ENCODE measurements at regions of chr17 and their contacts with region 1.

Region 1: DNA sequence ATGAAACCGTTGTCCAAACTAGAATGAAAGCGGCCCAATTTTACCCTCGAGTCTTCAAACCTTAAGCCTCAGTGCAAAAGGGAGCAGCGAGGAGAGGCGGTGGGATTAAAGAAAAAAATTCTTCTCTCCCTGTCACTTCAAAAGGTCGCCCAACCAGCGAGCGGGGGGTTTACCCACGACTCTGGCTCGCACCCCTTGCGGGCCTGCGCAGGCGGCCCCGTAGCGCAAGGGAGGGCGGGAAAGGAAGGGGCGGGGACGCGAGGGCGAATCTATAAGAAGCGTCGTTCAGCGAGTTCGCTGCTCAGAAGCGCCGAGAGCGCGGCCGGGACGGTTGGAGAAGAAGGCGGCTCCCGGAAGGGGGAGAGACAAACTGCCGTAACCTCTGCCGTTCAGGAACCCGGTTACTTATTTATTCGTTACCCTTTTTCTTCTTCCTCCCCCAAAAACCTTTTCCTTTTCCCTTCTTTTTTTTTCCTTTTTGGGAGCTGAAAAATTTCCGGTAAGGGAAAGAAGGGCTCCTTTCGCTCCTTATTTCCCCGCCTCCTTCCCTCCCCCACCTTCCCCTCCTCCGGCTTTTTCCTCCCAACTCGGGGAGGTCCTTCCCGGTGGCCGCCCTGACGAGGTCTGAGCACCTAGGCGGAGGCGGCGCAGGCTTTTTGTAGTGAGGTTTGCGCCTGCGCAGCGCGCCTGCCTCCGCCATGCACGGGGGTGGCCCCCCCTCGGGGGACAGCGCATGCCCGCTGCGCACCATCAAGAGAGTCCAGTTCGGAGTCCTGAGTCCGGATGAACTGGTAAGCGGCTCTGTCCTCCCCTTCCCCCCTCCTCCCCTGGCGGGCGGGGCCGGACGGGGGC is at the start of gene POLR2A:
- DNase-seq: peak; percentile 98
- H3K4me3 ChIP-seq: peak within 1 kb of the TSS; percentile 89
- H3K27ac ChIP-seq: peak within 1 kb of the TSS; percentile 90
- H3K4me1 ChIP-seq: peaks cover 38% of the 10 kb centered on the region
- CTCF ChIP-seq: no peak
- total RNA-seq, gene POLR2A: 76.6 and 84.2 TPM in 2 replicates

Region 2: GRCh38 chr17:7239091-7240027 is 244.9 kb before region 1 on chr17 and contains the start of gene PHF23:
- CTCF ChIA-PET with region 1: interaction called, 4 read pairs
- POLR2A ChIA-PET with region 1: no interaction called
- intact Hi-C with region 1: loop called (anchors 5 kb)
- DNase-seq: peak; percentile 99
- H3K4me3 ChIP-seq: peak within 1 kb of the TSS; percentile 100
- H3K27ac ChIP-seq: peak within 1 kb of the TSS; percentile 86
- H3K4me1 ChIP-seq: peaks cover 60% of the 10 kb centered on the region
- CTCF ChIP-seq: 0 out of 2 replicates have a peak, but pooled peaks have one; percentile 9
- total RNA-seq, gene PHF23: 47.7 and 50.8 TPM in 2 replicates

Region 3: DNA sequence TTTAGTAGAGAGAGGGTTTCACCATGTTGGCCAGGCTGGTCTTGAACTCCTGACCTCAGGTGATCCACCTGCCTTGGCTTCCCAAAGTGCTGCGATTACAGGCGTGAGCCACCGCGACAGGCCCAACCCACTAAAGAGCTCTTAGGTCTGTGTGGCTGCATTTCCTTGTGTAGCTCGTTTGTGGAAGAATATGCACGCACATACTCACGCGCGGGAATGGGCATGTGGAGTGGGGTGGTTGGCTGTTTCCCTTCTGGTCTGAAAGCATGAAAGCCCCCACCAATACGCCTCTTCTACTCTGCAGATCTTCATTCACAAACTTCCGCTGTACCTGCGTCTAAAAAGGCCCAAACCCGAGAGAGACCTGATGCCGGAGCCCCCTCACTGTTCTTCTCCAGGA is 29.3 kb before region 1 on chr17:
- CTCF ChIA-PET with region 1: no interaction called
- POLR2A ChIA-PET with region 1: no interaction called
- intact Hi-C with region 1: loop called (anchors 1 kb)
- DNase-seq: no peak
- H3K4me3 ChIP-seq: peak overlapping the region; percentile 77
- H3K27ac ChIP-seq: peak overlapping the region; percentile 58
- H3K4me1 ChIP-seq: peaks cover 11% of the 10 kb centered on the region
- CTCF ChIP-seq: no peak

Region 4: GRCh38 chr17:7561028-7561575 is 76.8 kb after region 1 on chr17:
- CTCF ChIA-PET with region 1: interaction called, 5 read pairs
- POLR2A ChIA-PET with region 1: interaction called, 3 read pairs
- intact Hi-C with region 1: loop called (anchors 2 kb)
- DNase-seq: peak; percentile 88
- H3K4me3 ChIP-seq: peak overlapping the region; percentile 94
- H3K27ac ChIP-seq: peak overlapping the region; percentile 80
- H3K4me1 ChIP-seq: peaks cover 47% of the 10 kb centered on the region
- CTCF ChIP-seq: peak; percentile 74

Region 5: DNA sequence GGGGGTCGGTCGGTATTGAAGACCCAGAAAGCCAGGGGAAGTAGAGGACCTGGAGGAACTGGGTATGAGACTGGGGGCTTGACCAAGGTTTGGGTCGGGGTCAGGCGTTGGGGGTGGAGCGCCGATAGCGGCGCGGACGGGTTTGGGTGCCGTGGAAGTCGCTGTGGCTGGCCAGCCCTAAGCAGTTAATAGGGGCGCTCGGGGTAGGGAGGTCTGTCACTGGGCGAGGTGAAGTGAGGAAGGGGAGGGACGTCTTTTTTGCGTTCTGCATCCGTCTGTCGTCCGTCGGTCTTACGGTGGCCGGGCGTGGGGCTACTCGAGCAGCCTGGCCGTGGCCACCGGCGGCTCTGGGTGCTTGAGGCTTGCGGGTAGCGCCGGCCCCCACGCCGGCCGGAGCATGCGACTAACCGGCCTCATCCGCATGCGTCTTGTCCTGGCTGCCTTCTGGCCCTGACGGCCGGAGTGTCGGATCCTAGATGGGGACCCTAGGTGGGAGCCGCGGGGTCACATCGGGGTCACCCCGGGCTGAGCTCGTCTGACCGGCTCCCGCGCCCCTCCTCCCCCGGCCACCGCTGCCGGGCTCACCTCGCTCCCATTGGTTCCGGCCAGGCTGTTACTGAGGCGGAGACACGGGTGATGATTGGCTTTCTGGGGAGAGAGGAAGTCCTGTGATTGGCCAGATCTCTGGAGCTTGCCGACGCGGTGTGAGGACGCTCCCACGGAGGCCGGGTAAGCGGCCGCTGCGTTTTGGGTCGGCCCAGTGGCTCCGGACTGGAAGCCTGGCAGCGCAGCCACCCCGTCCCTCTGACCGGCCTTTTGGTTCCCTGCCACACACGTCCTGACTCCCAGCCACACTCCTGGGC is 360.2 kb after region 1 on chr17:
- CTCF ChIA-PET with region 1: no interaction called
- POLR2A ChIA-PET with region 1: no interaction called
- intact Hi-C with region 1: loop called (anchors 5 kb)
- DNase-seq: peak; percentile 91
- H3K4me3 ChIP-seq: peak overlapping the region; percentile 79
- H3K27ac ChIP-seq: peak overlapping the region; percentile 92
- H3K4me1 ChIP-seq: peaks cover 26% of the 10 kb centered on the region
- CTCF ChIP-seq: no peak